Activated CD8-positive, alpha-beta T cell treated with anti-CD3 and anti-CD28 coated beads for 36 hours (primary cell): ENCODE measurements at regions of chr2 and their contacts with region 1.

Region 1: DNA sequence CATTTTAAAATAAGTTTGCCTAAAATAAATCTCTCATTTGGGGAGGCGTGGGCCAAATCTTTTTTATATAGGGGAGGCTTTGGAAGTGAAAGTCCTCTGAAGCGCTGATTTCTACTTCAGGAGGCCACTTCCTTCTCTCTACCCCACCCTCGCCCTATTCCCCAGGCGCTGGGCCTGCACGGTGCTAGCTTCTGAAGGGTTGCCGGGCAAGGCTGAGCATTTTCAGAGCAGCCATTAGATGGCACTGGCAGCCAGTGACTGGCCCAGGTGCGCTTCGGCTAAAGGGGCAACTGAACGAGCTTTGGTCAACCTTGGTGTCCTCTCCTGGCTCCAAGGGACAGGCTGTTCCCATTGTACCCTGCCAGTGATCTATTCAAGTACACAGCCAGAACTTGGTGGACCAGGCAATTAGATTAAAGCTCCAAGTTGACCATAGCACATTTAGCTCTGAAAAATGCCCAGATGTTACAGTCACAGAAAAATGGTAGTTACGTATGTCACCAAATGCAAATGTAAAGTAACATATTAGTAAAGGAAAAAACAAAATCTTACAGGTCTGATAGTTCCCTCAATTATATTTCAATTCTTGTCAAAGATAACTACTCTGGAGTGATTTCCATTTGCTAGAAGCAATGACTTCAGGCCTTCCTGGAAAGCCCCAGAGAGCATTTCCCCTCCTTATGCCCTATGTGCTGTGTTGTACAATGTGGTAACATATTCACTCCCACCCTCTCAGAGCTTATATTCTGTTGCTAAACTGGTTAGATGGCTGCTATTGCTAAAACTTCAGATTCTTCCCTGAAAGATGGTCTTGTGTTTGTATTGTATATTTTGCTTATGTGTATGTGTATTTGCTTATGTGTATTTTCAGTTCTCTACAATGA is 2.1 kb downstream of the POMC start:
- DNase-seq: peak; percentile 67
- ATAC-seq: peak; percentile 74
- H3K4me3 Mint-ChIP-seq: no peak overlapping the region
- H3K27ac Mint-ChIP-seq: peak overlapping the region; percentile 10
- H3K4me1 Mint-ChIP-seq: peaks cover 23% of the 10 kb centered on the region
- H3K27me3 Mint-ChIP-seq: peaks cover 41% of the 10 kb centered on the region
- CTCF ChIP-seq: peak; percentile 64

Region 2: DNA sequence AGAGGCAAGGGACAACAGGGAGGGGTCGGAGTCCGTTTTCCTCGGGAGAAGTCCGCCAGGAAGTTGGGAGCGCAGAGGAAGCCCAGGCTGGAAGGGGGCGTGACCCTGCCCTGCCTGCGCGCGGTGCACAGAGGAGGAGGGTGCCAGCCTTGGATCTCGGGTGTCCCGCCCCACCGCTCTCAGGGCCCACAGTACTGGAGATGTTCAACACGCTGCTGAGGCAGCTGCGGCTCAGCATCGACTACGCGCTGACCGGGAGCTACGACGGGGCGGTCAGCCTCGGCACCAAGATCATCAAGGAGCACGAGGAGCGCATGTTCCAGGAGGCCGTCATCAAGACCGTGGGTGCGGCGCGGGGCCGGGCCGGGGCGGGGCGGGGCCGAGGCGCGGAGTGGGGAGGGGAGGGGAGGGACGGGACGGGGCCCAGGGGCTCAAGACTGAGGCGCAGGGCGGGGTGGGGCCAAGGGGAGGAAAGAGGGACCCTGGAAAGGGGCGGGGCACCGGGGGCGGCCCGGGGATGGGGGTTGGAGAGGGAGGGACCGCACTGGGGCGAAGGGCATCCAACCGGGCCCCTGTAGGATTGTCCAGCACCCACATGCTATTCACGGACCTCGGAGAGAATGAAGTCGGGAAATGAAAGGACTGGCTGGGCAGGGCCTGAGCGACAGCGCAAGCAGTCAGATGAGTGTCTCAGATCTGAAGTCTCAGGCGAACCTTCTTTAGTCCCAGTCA is 34.5 kb before region 1 on chr2:
- CTCF ChIA-PET with region 1: interaction called, 13 read pairs
- POLR2A ChIA-PET with region 1: no interaction called
- intact Hi-C with region 1: no loop called
- DNase-seq: peak; percentile 16
- ATAC-seq: peak; percentile 32
- H3K4me3 Mint-ChIP-seq: peak overlapping the region; percentile 45
- H3K27ac Mint-ChIP-seq: no peak overlapping the region
- H3K4me1 Mint-ChIP-seq: peaks cover 3% of the 10 kb centered on the region
- H3K27me3 Mint-ChIP-seq: peaks cover 41% of the 10 kb centered on the region
- CTCF ChIP-seq: no peak

Region 3: GRCh38 chr2:25151718-25152117 is 14.5 kb before region 1 on chr2:
- CTCF ChIA-PET with region 1: interaction called, 11 read pairs
- POLR2A ChIA-PET with region 1: no interaction called
- intact Hi-C with region 1: no loop called
- DNase-seq: no peak
- ATAC-seq: no peak
- H3K4me3 Mint-ChIP-seq: no peak overlapping the region
- H3K27ac Mint-ChIP-seq: no peak overlapping the region
- H3K4me1 Mint-ChIP-seq: no peaks in the 10 kb centered on the region
- H3K27me3 Mint-ChIP-seq: peaks cover 1% of the 10 kb centered on the region
- CTCF ChIP-seq: no peak

Region 4: DNA sequence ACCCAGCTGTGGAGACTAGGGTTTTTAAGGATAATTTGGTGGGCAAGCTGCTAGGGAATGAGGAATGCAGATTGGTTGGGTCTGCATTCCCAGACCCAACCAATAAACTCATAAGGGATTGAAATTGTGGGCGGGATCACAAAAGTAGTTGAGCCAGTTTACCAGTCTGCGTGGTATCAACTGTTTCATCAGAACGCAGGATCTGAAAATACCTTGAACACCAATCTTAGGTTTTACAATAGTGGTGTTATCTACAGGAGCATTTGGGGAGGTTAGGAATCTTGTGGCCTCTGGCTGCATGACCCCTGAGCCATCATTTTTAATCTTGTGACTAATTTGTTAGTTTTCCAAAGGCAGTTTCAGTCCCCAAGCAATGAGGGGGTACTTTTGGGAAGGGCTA is 16.4 kb after region 1 on chr2:
- CTCF ChIA-PET with region 1: no interaction called
- POLR2A ChIA-PET with region 1: no interaction called
- intact Hi-C with region 1: no loop called
- DNase-seq: no peak
- ATAC-seq: no peak
- H3K4me3 Mint-ChIP-seq: no peak overlapping the region
- H3K27ac Mint-ChIP-seq: no peak overlapping the region
- H3K4me1 Mint-ChIP-seq: no peaks in the 10 kb centered on the region
- H3K27me3 Mint-ChIP-seq: peaks cover 1% of the 10 kb centered on the region
- CTCF ChIP-seq: no peak

Region 5: GRCh38 chr2:25197336-25198208 is 31.3 kb after region 1 on chr2:
- CTCF ChIA-PET with region 1: interaction called, 79 read pairs
- POLR2A ChIA-PET with region 1: no interaction called
- intact Hi-C with region 1: loop called (anchors 2 kb)
- DNase-seq: no peak
- ATAC-seq: no peak
- H3K4me3 Mint-ChIP-seq: no peak overlapping the region
- H3K27ac Mint-ChIP-seq: no peak overlapping the region
- H3K4me1 Mint-ChIP-seq: peaks cover 6% of the 10 kb centered on the region
- H3K27me3 Mint-ChIP-seq: no peaks in the 10 kb centered on the region
- CTCF ChIP-seq: no peak

Region 6: GRCh38 chr2:25218100-25218499 is 51.9 kb after region 1 on chr2:
- CTCF ChIA-PET with region 1: no interaction called
- POLR2A ChIA-PET with region 1: no interaction called
- intact Hi-C with region 1: no loop called
- DNase-seq: no peak
- ATAC-seq: no peak
- H3K4me3 Mint-ChIP-seq: no peak overlapping the region
- H3K27ac Mint-ChIP-seq: no peak overlapping the region
- H3K4me1 Mint-ChIP-seq: peaks cover 5% of the 10 kb centered on the region
- H3K27me3 Mint-ChIP-seq: no peaks in the 10 kb centered on the region
- CTCF ChIP-seq: no peak

Region 7: GRCh38 chr2:25228848-25229278 is 62.6 kb after region 1 on chr2:
- CTCF ChIA-PET with region 1: interaction called, 17 read pairs
- POLR2A ChIA-PET with region 1: no interaction called
- intact Hi-C with region 1: no loop called
- DNase-seq: peak; percentile 50
- ATAC-seq: peak; percentile 52
- H3K4me3 Mint-ChIP-seq: no peak overlapping the region
- H3K27ac Mint-ChIP-seq: no peak overlapping the region
- H3K4me1 Mint-ChIP-seq: peaks cover 21% of the 10 kb centered on the region
- H3K27me3 Mint-ChIP-seq: no peaks in the 10 kb centered on the region
- CTCF ChIP-seq: peak; percentile 59

Region 8: GRCh38 chr2:25473758-25474340 is 307.6 kb after region 1 on chr2:
- CTCF ChIA-PET with region 1: no interaction called
- POLR2A ChIA-PET with region 1: no interaction called
- intact Hi-C with region 1: no loop called
- DNase-seq: no peak
- ATAC-seq: no peak
- H3K4me3 Mint-ChIP-seq: no peak overlapping the region
- H3K27ac Mint-ChIP-seq: no peak overlapping the region
- H3K4me1 Mint-ChIP-seq: no peaks in the 10 kb centered on the region
- H3K27me3 Mint-ChIP-seq: no peaks in the 10 kb centered on the region
- CTCF ChIP-seq: no peak